ENCODE measurements at regions of chr12 and their contacts with region 1.

Region 1: GRCh38 chr12:57430931-57431720 is at the start of gene R3HDM2:
- DNase-seq: peak; percentile 95
- H3K4me3 ChIP-seq: peak within 1 kb of the TSS; percentile 46 to 75 (median 69)
- H3K27ac ChIP-seq: peak within 1 kb of the TSS; percentile 64
- H3K4me1 ChIP-seq: peaks cover 6% of the 10 kb centered on the region
- H3K27me3 ChIP-seq: no peaks in the 10 kb centered on the region
- CTCF ChIP-seq: no peak
- POLR2A ChIP-seq: peak; percentile 96
- total RNA-seq, gene R3HDM2: 31.3 and 36.6 TPM in 2 replicates

Region 2: GRCh38 chr12:57368349-57369095 is 62.6 kb before region 1 on chr12:
- CTCF ChIA-PET with region 1: no interaction called
- POLR2A ChIA-PET with region 1: interaction called, 12 read pairs
- dilution Hi-C with region 1: no loop called
- intact Hi-C with region 1: no loop called
- DNase-seq: no peak
- H3K4me3 ChIP-seq: no peak overlapping the region
- H3K27ac ChIP-seq: no peak overlapping the region
- H3K4me1 ChIP-seq: no peaks in the 10 kb centered on the region
- H3K27me3 ChIP-seq: no peaks in the 10 kb centered on the region
- CTCF ChIP-seq: no peak
- POLR2A ChIP-seq: no peak

Region 3: DNA sequence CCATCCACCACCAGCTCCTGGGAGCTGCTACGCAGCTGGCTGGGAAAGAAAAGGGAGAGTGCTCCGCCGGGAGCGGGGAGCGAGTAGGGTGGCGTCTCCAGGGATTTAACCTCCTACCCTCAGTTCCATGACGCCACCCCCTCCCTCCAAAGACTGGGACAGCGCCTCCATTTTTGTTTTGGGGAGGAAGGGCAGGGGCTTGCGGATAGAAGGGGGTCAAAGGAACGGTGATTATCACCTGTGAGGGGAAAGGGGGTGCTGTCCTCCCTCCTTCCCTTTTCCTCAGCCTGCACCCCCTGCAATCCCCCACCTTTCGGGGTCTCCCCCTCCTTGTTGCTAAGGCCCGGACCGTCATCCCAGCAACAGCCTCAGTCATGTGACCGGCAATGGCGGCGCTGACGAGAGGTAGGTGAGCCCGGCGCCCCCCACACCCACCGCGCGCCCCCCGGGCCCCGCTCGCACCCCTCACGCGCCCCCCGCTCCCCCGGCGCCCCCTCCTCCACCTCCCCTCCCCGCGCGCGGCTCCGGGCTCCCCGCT is 173.4 kb after region 1 on chr12 and contains the start of gene DTX3:
- CTCF ChIA-PET with region 1: no interaction called
- POLR2A ChIA-PET with region 1: no interaction called
- dilution Hi-C with region 1: no loop called
- intact Hi-C with region 1: no loop called
- DNase-seq: peak; percentile 18
- H3K4me3 ChIP-seq: peak within 1 kb of the TSS; percentile 48 to 72 (median 56)
- H3K27ac ChIP-seq: peak within 1 kb of the TSS; percentile 23
- H3K4me1 ChIP-seq: peaks cover 6% of the 10 kb centered on the region
- H3K27me3 ChIP-seq: peaks cover 0 to 4% of the 10 kb centered on the region in 2 experiments
- CTCF ChIP-seq: no peak
- POLR2A ChIP-seq: no peak
- total RNA-seq, gene DTX3: 25.9 and 34.5 TPM in 2 replicates

Measured in endothelial cell of umbilical vein (primary cell).